ENCODE measurements at regions of chr2 and their contacts with region 1.

Region 1: DNA sequence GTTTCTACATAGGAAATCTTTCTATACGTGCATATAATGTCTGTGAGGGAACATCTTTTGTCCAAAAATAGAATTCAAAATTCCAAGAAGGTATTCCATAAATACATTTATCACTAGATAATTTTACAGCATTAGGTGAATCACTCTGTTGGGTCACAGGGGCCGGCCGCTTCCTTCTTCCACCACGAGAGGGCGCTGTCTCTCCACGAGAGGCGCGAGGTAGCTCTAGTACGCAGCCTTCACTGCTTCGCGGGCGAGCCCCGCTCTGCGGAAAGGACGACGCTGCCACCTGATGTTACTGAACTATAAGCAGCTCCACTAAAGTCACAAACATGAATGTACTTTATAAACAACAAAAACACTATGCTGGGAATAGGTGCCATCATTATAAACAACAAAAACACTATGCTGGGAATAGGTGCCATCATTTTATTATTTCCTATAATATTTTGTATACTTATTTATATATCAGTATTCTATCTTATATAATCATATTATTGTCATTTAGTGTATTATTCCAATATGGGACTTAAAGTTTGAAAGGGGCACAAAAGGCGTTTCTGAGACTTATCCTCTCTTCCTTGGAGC is 69.4 kb upstream of the REV1 start:
- DNase-seq: peak; percentile 81
- H3K4me3 ChIP-seq: no peak overlapping the region
- H3K27ac ChIP-seq: no peak overlapping the region
- H3K4me1 ChIP-seq: no peaks in the 10 kb centered on the region
- H3K27me3 ChIP-seq: peaks cover 58% of the 10 kb centered on the region
- CTCF ChIP-seq: peak; percentile 97

Region 2: DNA sequence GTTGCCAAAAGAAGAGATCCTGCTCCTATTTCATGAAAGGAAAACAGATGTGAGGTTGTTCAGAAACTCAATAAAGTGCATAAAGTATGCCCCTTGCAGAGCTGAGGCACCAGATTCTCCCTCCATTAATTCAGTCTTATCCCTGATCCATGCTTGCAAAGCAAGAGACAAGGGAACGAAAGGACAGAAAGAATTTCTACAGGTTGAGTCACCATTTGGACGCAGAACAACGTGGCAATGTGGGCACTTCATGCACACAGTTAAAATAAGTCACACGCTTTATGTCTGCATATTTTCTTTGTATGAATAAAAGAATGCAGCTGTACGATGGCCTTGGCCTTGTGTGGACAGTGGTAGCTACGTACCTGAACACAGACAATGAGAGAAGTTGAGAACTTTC is 252.4 kb after region 1 on chr2:
- CTCF ChIA-PET with region 1: no interaction called
- POLR2A ChIA-PET with region 1: no interaction called
- intact Hi-C with region 1: loop called (anchors 5 kb)
- DNase-seq: no peak
- H3K4me3 ChIP-seq: no peak overlapping the region
- H3K27ac ChIP-seq: no peak overlapping the region
- H3K4me1 ChIP-seq: no peaks in the 10 kb centered on the region
- H3K27me3 ChIP-seq: peaks cover 55% of the 10 kb centered on the region
- CTCF ChIP-seq: no peak

Region 3: DNA sequence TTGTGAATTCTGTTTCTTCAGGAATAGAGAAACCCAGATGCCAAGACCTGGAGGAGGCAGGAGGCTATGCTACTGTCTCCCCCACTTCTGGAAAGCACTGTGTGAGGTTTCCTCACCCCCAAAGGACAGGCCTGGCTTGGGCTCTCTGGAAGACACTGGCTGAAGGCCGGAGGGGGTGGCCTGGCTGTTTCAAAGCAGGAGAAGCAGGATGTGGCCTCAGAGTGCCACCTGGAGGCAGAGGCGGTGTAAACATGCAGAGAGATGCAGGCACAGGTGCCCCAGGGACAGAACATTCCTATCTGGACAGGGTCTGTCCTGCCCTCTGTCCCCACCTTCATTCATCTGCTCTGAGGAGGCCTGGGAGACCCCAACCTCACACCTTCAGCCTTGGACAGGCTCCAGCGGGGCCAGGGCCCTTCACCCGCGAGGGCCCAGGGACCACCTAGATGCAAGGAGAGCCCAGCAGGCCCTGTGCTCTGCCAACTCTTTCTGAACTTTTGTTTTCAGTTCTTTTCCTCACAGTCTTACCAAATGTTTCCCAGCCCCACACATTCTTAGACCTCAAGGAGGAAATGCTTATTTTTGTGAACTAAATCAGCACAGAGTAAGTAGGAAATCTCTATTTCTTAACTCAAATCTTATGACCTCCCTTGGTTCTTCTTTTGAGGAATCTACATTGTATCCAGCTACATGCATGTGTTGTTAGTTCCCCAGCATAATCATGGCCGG is 683.9 kb after region 1 on chr2:
- CTCF ChIA-PET with region 1: interaction called, 13 read pairs
- POLR2A ChIA-PET with region 1: no interaction called
- intact Hi-C with region 1: loop called (anchors 1 kb)
- DNase-seq: peak; percentile 47
- H3K4me3 ChIP-seq: no peak overlapping the region
- H3K27ac ChIP-seq: no peak overlapping the region
- H3K4me1 ChIP-seq: no peaks in the 10 kb centered on the region
- H3K27me3 ChIP-seq: no peaks in the 10 kb centered on the region
- CTCF ChIP-seq: peak; percentile 70

Region 4: GRCh38 chr2:100381240-100381639 is 822.1 kb after region 1 on chr2:
- CTCF ChIA-PET with region 1: no interaction called
- POLR2A ChIA-PET with region 1: no interaction called
- intact Hi-C with region 1: loop called (anchors 5 kb)
- DNase-seq: peak; percentile 86
- H3K4me3 ChIP-seq: no peak overlapping the region
- H3K27ac ChIP-seq: no peak overlapping the region
- H3K4me1 ChIP-seq: no peaks in the 10 kb centered on the region
- H3K27me3 ChIP-seq: no peaks in the 10 kb centered on the region
- CTCF ChIP-seq: peak; percentile 92